ENCODE measurements at regions of chr2 and their contacts with region 1.

Region 1: GRCh38 chr2:182980115-182980514 is 58.1 kb downstream of the NCKAP1 start:
- DNase-seq: no peak
- ATAC-seq: peak; percentile 67
- H3K4me3 Mint-ChIP-seq: no peak overlapping the region
- H3K27ac Mint-ChIP-seq: no peak overlapping the region
- H3K4me1 Mint-ChIP-seq: no peaks in the 10 kb centered on the region
- H3K27me3 Mint-ChIP-seq: peaks cover 3% of the 10 kb centered on the region
- CTCF ChIP-seq: peak; percentile 93

Region 2: GRCh38 chr2:181742922-181743722 is 1237.0 kb before region 1 on chr2:
- CTCF ChIA-PET with region 1: no interaction called
- POLR2A ChIA-PET with region 1: no interaction called
- intact Hi-C with region 1: loop called (anchors 2 kb)
- DNase-seq: no peak
- ATAC-seq: no peak
- H3K4me3 Mint-ChIP-seq: no peak overlapping the region
- H3K27ac Mint-ChIP-seq: no peak overlapping the region
- H3K4me1 Mint-ChIP-seq: no peaks in the 10 kb centered on the region
- H3K27me3 Mint-ChIP-seq: peaks cover 12% of the 10 kb centered on the region
- CTCF ChIP-seq: no peak

Region 3: GRCh38 chr2:182186132-182186735 is 793.9 kb before region 1 on chr2:
- CTCF ChIA-PET with region 1: interaction called, 60 read pairs
- POLR2A ChIA-PET with region 1: no interaction called
- intact Hi-C with region 1: loop called (anchors 1 kb)
- DNase-seq: no peak
- ATAC-seq: no peak
- H3K4me3 Mint-ChIP-seq: no peak overlapping the region
- H3K27ac Mint-ChIP-seq: no peak overlapping the region
- H3K4me1 Mint-ChIP-seq: no peaks in the 10 kb centered on the region
- H3K27me3 Mint-ChIP-seq: peaks cover 2% of the 10 kb centered on the region
- CTCF ChIP-seq: peak; percentile 42

Region 4: DNA sequence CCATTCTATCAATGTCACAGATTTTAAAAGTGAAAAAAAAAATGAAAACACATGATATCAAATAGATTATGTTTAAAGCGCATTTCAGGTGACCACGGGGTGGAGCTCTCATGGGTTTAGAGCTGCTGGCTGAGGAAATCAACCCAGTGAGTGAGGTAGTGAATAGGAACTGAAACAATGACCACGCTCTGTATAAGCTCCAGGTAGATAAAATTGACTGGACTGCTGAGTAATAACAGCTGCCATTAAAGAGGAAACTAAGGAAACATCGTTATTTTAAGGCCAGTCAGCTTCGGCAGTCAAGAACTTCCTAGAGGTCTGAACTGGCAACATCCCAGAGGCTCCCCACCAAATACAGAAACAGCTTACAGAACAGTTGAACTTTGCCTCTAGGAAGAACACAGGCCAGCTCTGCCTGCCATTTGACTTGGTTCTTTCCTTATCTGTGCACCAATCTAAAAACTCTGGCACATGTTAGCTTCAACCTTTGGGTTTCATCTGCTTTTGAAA is 739.2 kb before region 1 on chr2:
- CTCF ChIA-PET with region 1: interaction called, 9 read pairs
- POLR2A ChIA-PET with region 1: no interaction called
- intact Hi-C with region 1: loop called (anchors 1 kb)
- DNase-seq: no peak
- ATAC-seq: peak; percentile 62
- H3K4me3 Mint-ChIP-seq: no peak overlapping the region
- H3K27ac Mint-ChIP-seq: no peak overlapping the region
- H3K4me1 Mint-ChIP-seq: peaks cover 7% of the 10 kb centered on the region
- H3K27me3 Mint-ChIP-seq: no peaks in the 10 kb centered on the region
- CTCF ChIP-seq: no peak

Region 5: DNA sequence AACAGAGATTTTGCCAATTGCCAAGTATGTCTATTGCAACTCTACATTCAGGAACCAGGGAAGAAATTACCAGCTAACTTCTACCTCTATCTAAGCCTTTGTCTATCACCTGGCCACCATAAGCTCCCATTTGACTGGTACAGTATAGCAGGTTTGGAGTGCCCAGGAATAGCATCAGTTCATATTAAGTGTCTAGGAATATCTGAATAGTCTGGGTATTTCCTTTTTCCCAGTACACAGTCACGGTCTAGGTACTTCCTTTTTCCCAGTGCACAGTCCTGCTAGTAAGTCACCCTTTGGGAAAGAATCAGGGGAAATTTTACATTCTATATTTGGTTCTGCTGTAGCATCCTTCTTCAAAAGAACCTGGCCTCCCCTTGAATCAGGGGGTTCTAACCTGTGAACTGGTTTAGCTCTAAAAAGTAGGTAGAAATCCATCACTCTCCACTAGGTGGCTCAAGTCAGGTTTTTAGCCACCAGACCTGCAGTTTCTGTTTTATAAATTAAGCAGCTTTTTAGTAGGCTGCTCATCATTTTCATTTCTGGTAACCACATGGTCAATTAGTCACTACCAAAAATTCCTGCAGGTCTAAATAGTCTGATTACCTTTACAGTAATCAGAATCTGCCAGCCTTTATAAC is 313.3 kb before region 1 on chr2:
- CTCF ChIA-PET with region 1: interaction called, 33 read pairs
- POLR2A ChIA-PET with region 1: no interaction called
- intact Hi-C with region 1: loop called (anchors 1 kb)
- DNase-seq: no peak
- ATAC-seq: peak; percentile 52
- H3K4me3 Mint-ChIP-seq: no peak overlapping the region
- H3K27ac Mint-ChIP-seq: no peak overlapping the region
- H3K4me1 Mint-ChIP-seq: peaks cover 7% of the 10 kb centered on the region
- H3K27me3 Mint-ChIP-seq: no peaks in the 10 kb centered on the region
- CTCF ChIP-seq: no peak

Region 6: DNA sequence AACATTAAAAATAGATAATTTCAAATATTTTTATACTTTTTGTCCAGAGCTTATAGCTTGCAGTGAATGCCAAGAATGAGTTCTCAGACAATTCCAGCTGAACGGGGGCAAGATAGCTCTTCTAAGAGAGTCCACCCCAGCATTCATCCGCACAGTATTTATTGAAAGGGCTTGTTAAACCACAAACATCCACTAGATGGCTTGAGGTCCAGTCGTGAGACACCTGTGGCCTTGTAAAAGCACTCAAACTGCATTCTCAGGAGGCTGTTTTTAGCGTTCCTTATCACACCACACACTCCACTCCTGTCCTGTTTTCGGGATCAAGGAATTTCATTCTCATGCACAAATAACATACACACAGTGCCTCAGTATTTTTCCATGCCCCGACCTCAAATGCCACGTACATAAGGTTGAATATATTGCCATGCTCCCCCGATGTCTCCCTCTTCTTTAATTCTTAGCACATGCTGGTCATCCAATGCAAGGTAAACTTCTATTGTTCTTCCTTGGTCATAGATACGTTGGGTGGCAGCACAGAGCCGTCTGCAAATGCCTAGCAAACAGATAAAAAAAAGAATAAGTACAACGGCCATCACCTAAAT is 216.7 kb before region 1 on chr2:
- CTCF ChIA-PET with region 1: interaction called, 7 read pairs
- POLR2A ChIA-PET with region 1: no interaction called
- intact Hi-C with region 1: loop called (anchors 2 kb)
- DNase-seq: no peak
- ATAC-seq: no peak
- H3K4me3 Mint-ChIP-seq: no peak overlapping the region
- H3K27ac Mint-ChIP-seq: no peak overlapping the region
- H3K4me1 Mint-ChIP-seq: no peaks in the 10 kb centered on the region
- H3K27me3 Mint-ChIP-seq: no peaks in the 10 kb centered on the region
- CTCF ChIP-seq: no peak

Region 7: DNA sequence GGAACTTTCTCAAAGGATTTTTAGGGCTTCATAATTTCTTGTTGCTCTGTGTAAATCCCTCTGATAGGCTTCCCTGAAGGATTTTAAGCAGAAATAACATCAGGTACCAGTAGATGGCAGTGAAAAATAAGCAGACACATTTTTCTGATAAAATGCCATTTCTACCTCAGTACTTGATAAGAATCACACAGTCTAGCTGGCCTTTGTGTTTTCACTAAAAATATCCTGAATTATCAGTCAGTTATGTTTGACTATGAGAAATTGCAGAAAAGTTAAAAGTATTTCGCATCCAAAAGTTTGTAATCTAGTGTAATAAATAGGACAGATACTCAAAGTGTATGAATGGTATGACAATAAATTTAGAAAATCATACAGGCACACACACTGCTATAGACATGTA is 195.3 kb before region 1 on chr2:
- CTCF ChIA-PET with region 1: no interaction called
- POLR2A ChIA-PET with region 1: no interaction called
- intact Hi-C with region 1: loop called (anchors 5 kb)
- DNase-seq: no peak
- ATAC-seq: no peak
- H3K4me3 Mint-ChIP-seq: no peak overlapping the region
- H3K27ac Mint-ChIP-seq: no peak overlapping the region
- H3K4me1 Mint-ChIP-seq: no peaks in the 10 kb centered on the region
- H3K27me3 Mint-ChIP-seq: no peaks in the 10 kb centered on the region
- CTCF ChIP-seq: no peak